Heart left ventricle (tissue), 16 donors: ENCODE measurements at regions of chr5 and their contacts with region 1.

Region 1: DNA sequence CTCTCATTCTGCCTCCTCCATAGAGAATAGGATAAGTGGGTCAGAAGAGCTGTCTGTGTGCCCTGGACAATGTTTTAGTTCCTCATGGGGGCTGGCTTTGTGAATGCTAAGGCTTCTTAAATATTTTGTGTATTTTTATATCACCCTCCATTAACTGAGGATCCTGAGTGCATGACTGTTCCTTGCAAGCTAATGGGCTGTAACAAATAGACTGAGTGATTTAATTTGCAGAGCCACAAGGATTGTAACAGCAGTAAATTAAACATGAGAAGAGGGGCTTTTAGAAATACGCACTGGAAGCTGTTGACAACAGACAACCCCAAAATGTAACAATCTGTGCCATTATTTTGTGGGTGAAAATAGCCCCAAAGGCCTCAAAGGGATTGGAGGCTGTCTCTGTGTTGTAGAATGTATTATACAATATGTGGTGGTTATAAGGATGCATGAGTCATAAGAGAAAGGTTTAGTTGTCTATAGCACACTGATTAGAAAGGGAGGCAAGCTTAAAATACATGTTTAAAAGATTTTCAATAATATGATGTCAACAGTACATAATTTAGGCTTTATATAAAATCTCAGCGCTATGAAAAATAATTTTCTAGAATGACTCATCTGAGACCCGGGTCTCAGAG is 152.7 kb upstream of the ACTBL2 start:
- DNase-seq: no peak
- ATAC-seq: no peak
- H3K4me3 ChIP-seq: no peak overlapping the region
- H3K27ac ChIP-seq: no peak overlapping the region
- H3K4me1 ChIP-seq: no peaks in the 10 kb centered on the region
- H3K27me3 ChIP-seq: no peaks in the 10 kb centered on the region
- CTCF ChIP-seq: no peak
- POLR2A ChIP-seq: no peak

Region 2: DNA sequence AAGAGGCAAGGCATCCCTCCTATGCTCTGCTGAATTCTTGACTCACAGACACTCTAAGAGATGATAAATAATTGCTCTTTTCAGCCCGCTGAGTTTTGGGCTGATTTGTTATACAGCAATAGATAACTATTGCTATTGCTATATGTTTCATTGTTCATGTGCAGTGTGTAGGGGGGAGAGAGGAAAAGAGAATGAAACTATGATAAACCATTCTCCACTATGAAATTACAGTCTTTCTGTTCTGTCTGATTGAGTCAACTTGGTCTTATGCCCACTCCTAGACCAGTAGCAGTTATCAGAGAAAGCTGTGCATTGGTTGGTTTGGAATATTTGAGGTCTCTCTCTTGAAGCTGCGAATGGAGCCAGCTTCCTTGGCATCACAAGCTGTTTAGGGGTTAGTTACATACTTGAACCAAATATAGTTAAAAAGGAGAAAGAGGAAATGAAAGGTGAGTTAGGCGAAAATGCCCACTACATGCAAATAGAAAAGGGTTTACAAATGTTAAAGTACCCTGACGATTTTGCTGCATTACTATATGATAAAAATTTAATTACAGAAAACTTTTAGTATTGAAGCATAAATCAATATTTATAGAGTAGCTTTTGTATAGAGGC is 16.4 kb before region 1 on chr5:
- intact Hi-C with region 1: loop called in 1 of 10 experiments (anchors 1 kb)
- DNase-seq: no peak
- ATAC-seq: no peak
- H3K4me3 ChIP-seq: no peak overlapping the region
- H3K27ac ChIP-seq: no peak overlapping the region
- H3K4me1 ChIP-seq: no peaks in the 10 kb centered on the region
- H3K27me3 ChIP-seq: no peaks in the 10 kb centered on the region
- CTCF ChIP-seq: no peak
- POLR2A ChIP-seq: no peak